ENCODE measurements at regions of chr15 and their contacts with region 1.

Region 1: GRCh38 chr15:40974879-40975278 is 21.6 kb downstream of the CHAC1 start:
- DNase-seq: no peak
- ATAC-seq: no peak
- H3K4me3 Mint-ChIP-seq: no peak overlapping the region
- H3K27ac Mint-ChIP-seq: no peak overlapping the region
- H3K4me1 Mint-ChIP-seq: no peaks in the 10 kb centered on the region
- H3K27me3 Mint-ChIP-seq: no peaks in the 10 kb centered on the region
- CTCF ChIP-seq: no peak

Region 2: DNA sequence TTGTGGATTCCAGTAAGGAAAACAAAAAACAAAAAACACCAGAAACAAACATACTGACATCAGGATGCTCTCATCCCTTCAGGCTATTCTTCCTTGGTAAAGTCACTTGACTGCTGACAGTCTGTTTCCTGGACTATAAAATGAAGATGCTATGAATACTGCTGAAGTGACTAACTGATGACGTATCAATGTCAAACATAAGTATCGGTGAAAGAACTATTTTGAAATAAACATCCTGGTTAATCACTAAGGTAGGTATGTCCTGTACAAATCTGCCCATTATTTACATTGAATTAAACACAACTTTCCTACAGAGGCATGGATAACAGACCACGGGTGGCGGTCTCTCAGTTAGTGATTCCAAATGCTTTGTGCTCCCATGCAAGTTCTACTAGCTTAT is 24.3 kb after region 1 on chr15:
- CTCF ChIA-PET with region 1: no interaction called
- POLR2A ChIA-PET with region 1: interaction called, 11 read pairs
- intact Hi-C with region 1: no loop called
- DNase-seq: no peak
- ATAC-seq: no peak
- H3K4me3 Mint-ChIP-seq: no peak overlapping the region
- H3K27ac Mint-ChIP-seq: no peak overlapping the region
- H3K4me1 Mint-ChIP-seq: no peaks in the 10 kb centered on the region
- H3K27me3 Mint-ChIP-seq: no peaks in the 10 kb centered on the region
- CTCF ChIP-seq: no peak

Measured in activated B cell treated with CpG ODN at 0.5 μM for 24 hours (primary cell).